Cardiac septum (tissue), 1 donor: ENCODE measurements at regions of chr12 and their contacts with region 1.

Region 1: GRCh38 chr12:64625243-64626077 is 15.2 kb downstream of the RASSF3 start:
- DNase-seq: peak; percentile 83

Region 2: GRCh38 chr12:64318605-64319004 is 306.9 kb before region 1 on chr12:
- intact Hi-C with region 1: no loop called
- DNase-seq: no peak

Region 3: DNA sequence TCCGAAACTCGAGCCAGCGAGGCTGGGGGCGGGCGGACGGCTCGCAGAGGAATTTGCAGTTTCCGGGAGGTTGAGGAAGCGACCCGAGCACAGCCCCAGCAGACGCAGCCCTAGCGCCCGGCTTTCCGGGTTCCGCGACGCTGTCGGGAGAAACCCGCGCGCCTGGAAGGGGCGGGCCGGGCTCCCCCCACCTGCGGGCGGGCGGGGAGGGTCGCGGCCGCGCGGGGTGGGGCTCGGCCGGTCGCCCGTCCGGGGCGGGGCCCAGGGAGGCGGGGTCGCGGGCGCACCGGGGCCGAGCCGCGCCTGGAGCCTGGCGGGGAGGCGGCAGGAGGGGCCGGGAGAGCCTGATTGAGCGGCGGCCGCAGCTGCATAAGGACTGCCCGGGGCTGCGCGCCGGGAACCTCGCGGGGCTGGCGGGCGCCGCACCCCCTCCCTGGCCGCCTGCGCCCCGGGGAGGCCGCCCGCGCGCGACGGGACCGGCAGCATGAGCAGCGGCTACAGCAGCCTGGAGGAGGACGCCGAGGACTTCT is 15.2 kb before region 1 on chr12 and contains the start of gene RASSF3:
- intact Hi-C with region 1: loop called (anchors 2 kb)
- DNase-seq: peak; percentile 93
- total RNA-seq, gene RASSF3: 98.8 TPM

Region 4: GRCh38 chr12:64669270-64669842 is 43.9 kb after region 1 on chr12:
- intact Hi-C with region 1: loop called (anchors 5 kb)
- DNase-seq: peak; percentile 89

Region 5: GRCh38 chr12:64682572-64683277 is 57.3 kb after region 1 on chr12:
- intact Hi-C with region 1: loop called (anchors 5 kb)
- DNase-seq: peak; percentile 72